CD8-positive, alpha-beta T cell (primary cell): ENCODE measurements at regions of chr6 and their contacts with region 1.

Region 1: DNA sequence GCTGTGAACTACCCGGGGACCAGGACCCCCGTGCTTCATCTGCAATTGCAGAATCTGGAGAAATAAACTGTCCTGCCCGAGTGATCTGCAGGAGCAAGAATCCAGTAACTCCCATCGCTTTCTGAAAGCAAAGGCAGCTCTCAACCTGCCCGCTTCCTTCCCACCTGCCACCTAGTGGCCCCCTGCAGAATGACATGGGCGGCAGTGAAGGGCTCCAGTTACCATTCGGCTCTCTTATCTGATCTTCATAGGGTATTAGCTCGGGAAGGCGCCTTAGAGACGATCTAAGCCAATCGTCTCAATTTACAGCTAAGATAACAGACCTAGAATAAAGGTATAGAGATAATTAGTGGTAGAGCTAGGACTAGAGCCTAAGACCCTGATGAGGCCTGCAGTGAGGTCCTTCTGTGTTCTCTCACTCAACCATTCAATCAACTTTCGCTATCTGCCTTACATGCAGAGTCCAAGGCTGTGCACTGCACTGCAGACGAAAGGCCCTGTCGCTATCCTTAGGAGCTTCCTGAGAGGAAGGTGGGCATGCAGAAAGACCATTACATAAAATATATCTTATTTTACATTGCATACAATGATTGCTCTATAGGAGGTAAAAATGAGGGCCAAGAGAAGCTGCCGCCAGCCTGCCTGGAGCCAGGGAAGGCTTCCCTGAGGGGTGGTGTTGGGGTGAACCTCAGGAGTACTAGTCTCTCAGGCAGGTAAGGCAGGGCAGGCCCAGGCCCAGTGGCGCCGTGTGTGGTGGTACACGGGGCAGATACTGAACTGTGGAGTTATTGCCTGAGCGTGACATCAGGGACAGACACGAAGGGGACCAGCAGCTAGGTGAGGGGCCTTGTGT is 7.1 kb upstream of the PSMG4 start:
- DNase-seq: peak; percentile 61 to 87 (median 80)
- ATAC-seq: peak; percentile 99
- H3K4me3 ChIP-seq: no peak overlapping the region
- H3K4me3 Mint-ChIP-seq: peak overlapping the region; percentile 32
- H3K27ac ChIP-seq: no peak overlapping the region
- H3K27ac Mint-ChIP-seq: no peak overlapping the region
- H3K4me1 ChIP-seq: no peaks in the 10 kb centered on the region
- H3K4me1 Mint-ChIP-seq: peaks cover 6% of the 10 kb centered on the region
- H3K27me3 ChIP-seq: peaks cover 3 to 5% of the 10 kb centered on the region in 2 experiments
- H3K27me3 Mint-ChIP-seq: peaks cover 26% of the 10 kb centered on the region
- CTCF ChIP-seq: peak; percentile 95

Region 2: GRCh38 chr6:3118353-3119039 is 133.2 kb before region 1 on chr6 and contains the start of gene BPHL:
- CTCF ChIA-PET with region 1: interaction called, 11 read pairs
- POLR2A ChIA-PET with region 1: interaction called, 4 read pairs
- intact Hi-C with region 1: loop called in 1 of 2 experiments (anchors 2 kb)
- DNase-seq: peak; percentile 97 to 100 (median 99)
- ATAC-seq: peak; percentile 95
- H3K4me3 ChIP-seq: peak within 1 kb of the TSS; percentile 63 to 80
- H3K4me3 Mint-ChIP-seq: peak within 1 kb of the TSS; percentile 92
- H3K27ac ChIP-seq: peak within 1 kb of the TSS; percentile 85 to 90
- H3K27ac Mint-ChIP-seq: peak within 1 kb of the TSS; percentile 96
- H3K4me1 ChIP-seq: peaks cover 12% of the 10 kb centered on the region
- H3K4me1 Mint-ChIP-seq: peaks cover 13% of the 10 kb centered on the region
- H3K27me3 ChIP-seq: no peaks in the 10 kb centered on the region
- H3K27me3 Mint-ChIP-seq: no peaks in the 10 kb centered on the region
- CTCF ChIP-seq: no peak
- total RNA-seq, gene BPHL: 3.7 to 5.5 TPM

Region 3: DNA sequence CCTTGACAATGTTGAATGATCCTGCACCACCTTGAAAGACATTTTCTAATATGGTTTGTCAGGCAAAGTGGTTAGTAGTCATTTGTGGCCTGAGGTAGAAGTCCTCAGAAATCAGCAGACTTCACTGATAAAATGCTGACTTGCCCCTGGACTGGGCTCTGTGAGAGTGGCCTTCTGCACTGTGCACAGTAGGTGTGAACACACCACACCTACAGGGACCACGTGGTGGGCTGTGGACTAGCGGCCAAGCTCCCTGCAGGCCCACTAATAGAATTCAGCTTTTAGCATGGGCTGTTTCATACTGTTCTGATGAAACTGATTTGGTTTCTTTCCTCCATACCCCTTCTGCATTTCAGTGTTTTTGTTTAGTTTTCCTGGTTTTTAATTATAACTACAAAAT is 125.9 kb before region 1 on chr6:
- CTCF ChIA-PET with region 1: interaction called, 50 read pairs
- POLR2A ChIA-PET with region 1: interaction called, 5 read pairs
- intact Hi-C with region 1: loop called (anchors 1 kb)
- DNase-seq: no peak
- ATAC-seq: no peak
- H3K4me3 ChIP-seq: no peak overlapping the region
- H3K4me3 Mint-ChIP-seq: no peak overlapping the region
- H3K27ac ChIP-seq: no peak overlapping the region
- H3K27ac Mint-ChIP-seq: no peak overlapping the region
- H3K4me1 ChIP-seq: no peaks in the 10 kb centered on the region
- H3K4me1 Mint-ChIP-seq: peaks cover 4% of the 10 kb centered on the region
- H3K27me3 ChIP-seq: no peaks in the 10 kb centered on the region
- H3K27me3 Mint-ChIP-seq: no peaks in the 10 kb centered on the region
- CTCF ChIP-seq: no peak

Region 4: GRCh38 chr6:3131695-3132094 is 120.0 kb before region 1 on chr6:
- CTCF ChIA-PET with region 1: interaction called, 50 read pairs
- POLR2A ChIA-PET with region 1: no interaction called
- intact Hi-C with region 1: loop called (anchors 1 kb)
- DNase-seq: no peak
- ATAC-seq: no peak
- H3K4me3 ChIP-seq: no peak overlapping the region
- H3K4me3 Mint-ChIP-seq: no peak overlapping the region
- H3K27ac ChIP-seq: no peak overlapping the region
- H3K27ac Mint-ChIP-seq: no peak overlapping the region
- H3K4me1 ChIP-seq: no peaks in the 10 kb centered on the region
- H3K4me1 Mint-ChIP-seq: no peaks in the 10 kb centered on the region
- H3K27me3 ChIP-seq: no peaks in the 10 kb centered on the region
- H3K27me3 Mint-ChIP-seq: no peaks in the 10 kb centered on the region
- CTCF ChIP-seq: no peak

Region 5: GRCh38 chr6:3157131-3157927 is 94.4 kb before region 1 on chr6 and contains the start of gene TUBB2A:
- CTCF ChIA-PET with region 1: interaction called, 12 read pairs
- POLR2A ChIA-PET with region 1: interaction called, 4 read pairs
- intact Hi-C with region 1: loop called in 1 of 2 experiments (anchors 2 kb)
- DNase-seq: peak; percentile 77 to 94 (median 88)
- ATAC-seq: peak; percentile 61
- H3K4me3 ChIP-seq: peak within 1 kb of the TSS; percentile 65
- H3K4me3 Mint-ChIP-seq: peak within 1 kb of the TSS; percentile 92
- H3K27ac ChIP-seq: peak within 1 kb of the TSS; percentile 73 to 84
- H3K27ac Mint-ChIP-seq: peak within 1 kb of the TSS; percentile 91
- H3K4me1 ChIP-seq: peaks cover 29% of the 10 kb centered on the region
- H3K4me1 Mint-ChIP-seq: peaks cover 36% of the 10 kb centered on the region
- H3K27me3 ChIP-seq: no peaks in the 10 kb centered on the region
- H3K27me3 Mint-ChIP-seq: peaks cover 2% of the 10 kb centered on the region
- CTCF ChIP-seq: peak; percentile 65
- total RNA-seq, gene TUBB2A: 61.4 to 63.9 TPM

Region 6: GRCh38 chr6:3162565-3163247 is 89.0 kb before region 1 on chr6:
- CTCF ChIA-PET with region 1: interaction called, 12 read pairs
- POLR2A ChIA-PET with region 1: interaction called, 4 read pairs
- intact Hi-C with region 1: loop called in 1 of 2 experiments (anchors 2 kb)
- DNase-seq: peak; percentile 12 to 84 (median 63)
- ATAC-seq: peak; percentile 47
- H3K4me3 ChIP-seq: peak overlapping the region; percentile 71 to 79
- H3K4me3 Mint-ChIP-seq: peak overlapping the region; percentile 84
- H3K27ac ChIP-seq: peak overlapping the region in 1 of 2 experiments; percentile 72
- H3K27ac Mint-ChIP-seq: peak overlapping the region; percentile 86
- H3K4me1 ChIP-seq: peaks cover 33% of the 10 kb centered on the region
- H3K4me1 Mint-ChIP-seq: peaks cover 37% of the 10 kb centered on the region
- H3K27me3 ChIP-seq: no peaks in the 10 kb centered on the region
- H3K27me3 Mint-ChIP-seq: no peaks in the 10 kb centered on the region
- CTCF ChIP-seq: no peak

Region 7: GRCh38 chr6:3312604-3313231 is 61.0 kb after region 1 on chr6:
- CTCF ChIA-PET with region 1: no interaction called
- POLR2A ChIA-PET with region 1: no interaction called
- intact Hi-C with region 1: no loop called
- DNase-seq: no peak
- ATAC-seq: no peak
- H3K4me3 ChIP-seq: no peak overlapping the region
- H3K4me3 Mint-ChIP-seq: no peak overlapping the region
- H3K27ac ChIP-seq: no peak overlapping the region
- H3K27ac Mint-ChIP-seq: no peak overlapping the region
- H3K4me1 ChIP-seq: peaks cover 7% of the 10 kb centered on the region
- H3K4me1 Mint-ChIP-seq: peaks cover 5% of the 10 kb centered on the region
- H3K27me3 ChIP-seq: no peaks in the 10 kb centered on the region
- H3K27me3 Mint-ChIP-seq: peaks cover 11% of the 10 kb centered on the region
- CTCF ChIP-seq: no peak

Region 8: DNA sequence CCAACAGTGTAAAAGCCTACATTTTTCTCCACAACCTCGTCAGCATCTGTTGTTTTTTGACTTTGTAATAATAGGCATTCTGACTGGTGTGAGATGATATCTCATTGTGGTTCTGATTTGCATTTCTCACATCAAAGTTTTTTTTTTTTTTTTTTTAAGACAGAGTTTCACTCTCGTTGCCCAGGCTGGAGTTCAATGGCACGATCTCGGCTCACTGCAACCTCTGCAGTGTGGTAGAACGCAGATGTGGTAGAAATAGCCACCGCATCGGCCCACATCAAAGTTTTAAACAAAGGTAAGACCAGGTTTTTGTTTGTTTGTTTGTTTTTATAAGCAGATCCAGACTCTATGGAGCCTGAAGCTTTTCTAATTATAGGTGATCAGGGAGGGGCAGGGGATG is 1820.8 kb after region 1 on chr6:
- CTCF ChIA-PET with region 1: no interaction called
- POLR2A ChIA-PET with region 1: no interaction called
- intact Hi-C with region 1: no loop called
- DNase-seq: no peak
- ATAC-seq: no peak
- H3K4me3 ChIP-seq: no peak overlapping the region
- H3K4me3 Mint-ChIP-seq: no peak overlapping the region
- H3K27ac ChIP-seq: no peak overlapping the region
- H3K27ac Mint-ChIP-seq: no peak overlapping the region
- H3K4me1 ChIP-seq: no peaks in the 10 kb centered on the region
- H3K4me1 Mint-ChIP-seq: peaks cover 4% of the 10 kb centered on the region
- H3K27me3 ChIP-seq: no peaks in the 10 kb centered on the region
- H3K27me3 Mint-ChIP-seq: peaks cover 3% of the 10 kb centered on the region
- CTCF ChIP-seq: no peak